Uterus (tissue), 4 donors: ENCODE measurements at regions of chr3 and their contacts with region 1.

Region 1: DNA sequence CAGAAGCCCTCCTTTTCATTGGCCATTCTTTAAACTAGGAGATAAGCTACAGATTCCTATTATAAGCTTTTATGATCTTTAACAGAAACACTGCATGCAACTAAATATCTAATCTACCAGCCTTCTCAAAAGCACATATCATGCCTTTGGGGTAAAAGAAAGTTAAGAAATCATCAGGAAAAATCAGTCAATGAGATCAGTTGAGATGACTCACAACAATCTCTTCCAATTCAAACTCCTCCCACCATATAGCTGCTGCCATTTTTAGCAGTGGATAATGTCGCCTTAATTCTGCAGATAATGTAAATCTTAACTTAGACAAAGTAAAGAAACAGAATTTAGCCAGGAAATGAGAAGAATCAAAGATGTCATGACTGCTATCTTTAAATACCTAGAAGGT is 135.2 kb upstream of the BCL6 start:
- DNase-seq: no peak
- H3K4me3 ChIP-seq: no peak overlapping the region
- H3K27ac ChIP-seq: no peak overlapping the region
- H3K4me1 ChIP-seq: no peaks in the 10 kb centered on the region
- H3K27me3 ChIP-seq: no peaks in the 10 kb centered on the region
- CTCF ChIP-seq: no peak
- POLR2A ChIP-seq: no peak

Region 2: DNA sequence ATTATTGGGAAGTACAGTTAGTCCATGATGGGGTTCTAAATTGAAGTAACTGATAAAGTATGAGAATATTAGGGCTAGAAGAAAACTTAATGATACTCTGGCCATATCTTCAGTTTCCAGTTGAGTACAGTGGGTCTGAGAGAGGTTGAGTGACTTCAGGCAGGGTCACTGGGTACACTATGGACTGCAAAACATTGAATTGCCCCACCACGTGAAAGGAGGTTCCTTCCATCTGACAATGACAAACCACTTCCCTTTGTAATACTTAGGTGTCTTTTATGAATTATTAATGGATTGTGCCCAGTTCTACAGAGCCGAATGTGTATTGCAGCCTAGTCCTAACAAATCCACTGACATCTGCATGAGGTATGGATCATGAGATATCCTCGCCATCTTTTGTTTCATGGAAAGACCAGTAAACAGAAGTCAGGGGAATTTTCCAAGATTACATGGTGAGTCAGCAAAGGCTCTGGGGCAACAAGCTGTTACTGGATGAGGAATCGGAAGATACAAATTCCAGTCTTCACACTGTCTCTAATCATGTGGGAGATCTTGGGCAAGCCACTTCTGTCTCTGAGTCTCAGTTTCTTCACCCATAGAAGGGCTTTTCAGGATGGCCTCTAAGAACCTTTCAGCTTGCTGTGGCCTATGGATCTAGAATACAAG is 68.7 kb before region 1 on chr3:
- intact Hi-C with region 1: loop called (anchors 5 kb)
- DNase-seq: no peak
- H3K4me3 ChIP-seq: no peak overlapping the region
- H3K27ac ChIP-seq: no peak overlapping the region
- H3K4me1 ChIP-seq: no peaks in the 10 kb centered on the region
- H3K27me3 ChIP-seq: no peaks in the 10 kb centered on the region
- CTCF ChIP-seq: no peak
- POLR2A ChIP-seq: no peak